ENCODE measurements at regions of chr22 and their contacts with region 1.

Region 1: DNA sequence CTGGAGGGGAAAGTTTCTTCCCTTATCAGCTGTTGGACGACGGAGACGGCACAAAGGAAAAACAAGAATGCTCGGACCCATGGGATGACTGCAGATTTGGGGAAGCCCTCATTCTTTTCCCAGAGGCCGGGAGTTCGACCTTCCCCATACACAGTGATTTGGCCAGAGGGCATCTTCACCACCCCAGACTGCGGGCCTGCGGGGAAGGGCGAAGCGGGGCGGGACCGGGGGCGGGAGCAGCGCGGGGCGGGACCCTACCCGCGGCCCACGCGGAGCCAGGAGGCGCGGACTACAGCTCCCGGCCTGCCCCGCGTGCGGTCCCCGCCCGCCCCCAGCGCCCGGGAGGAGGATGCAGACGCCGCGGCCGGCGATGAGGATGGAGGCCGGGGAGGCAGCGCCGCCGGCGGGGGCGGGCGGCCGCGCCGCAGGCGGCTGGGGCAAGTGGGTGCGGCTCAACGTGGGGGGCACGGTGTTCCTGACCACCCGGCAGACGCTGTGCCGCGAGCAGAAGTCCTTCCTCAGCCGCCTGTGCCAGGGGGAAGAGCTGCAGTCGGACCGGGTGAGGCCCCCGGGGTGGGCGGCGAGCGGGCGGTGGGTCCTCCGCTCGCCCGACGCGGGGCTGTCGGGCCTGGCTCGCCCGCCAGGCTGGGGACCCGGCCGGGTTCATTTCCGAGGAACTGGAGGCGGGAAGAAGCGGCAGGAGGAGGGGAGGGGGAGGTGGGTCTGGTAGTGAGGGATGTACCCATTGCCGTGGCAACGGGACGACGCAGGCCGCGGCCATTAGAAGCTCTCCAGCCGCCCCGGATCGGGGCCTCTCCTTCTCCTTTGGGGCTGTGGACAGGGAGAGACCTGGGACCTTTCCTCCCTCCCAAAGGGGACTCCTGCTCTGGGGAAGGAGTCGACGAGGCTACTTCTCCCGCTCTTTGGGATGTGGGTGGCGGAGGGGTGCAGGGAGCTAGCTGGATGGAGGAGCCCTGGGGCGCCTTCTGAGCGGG is at the start of gene KCTD17:
- DNase-seq: peak in 1 of 2 experiments; percentile 73
- H3K4me3 ChIP-seq: peak within 1 kb of the TSS; percentile 87
- H3K27ac ChIP-seq: no peak within 1 kb of the TSS
- H3K4me1 ChIP-seq: peaks cover 7% of the 10 kb centered on the region; the same call in 1 of the 2 replicates
- H3K27me3 ChIP-seq: no peaks in the 10 kb centered on the region
- CTCF ChIP-seq: no peak
- total RNA-seq, gene KCTD17: 29.5 and 32.6 TPM in 2 replicates

Region 2: DNA sequence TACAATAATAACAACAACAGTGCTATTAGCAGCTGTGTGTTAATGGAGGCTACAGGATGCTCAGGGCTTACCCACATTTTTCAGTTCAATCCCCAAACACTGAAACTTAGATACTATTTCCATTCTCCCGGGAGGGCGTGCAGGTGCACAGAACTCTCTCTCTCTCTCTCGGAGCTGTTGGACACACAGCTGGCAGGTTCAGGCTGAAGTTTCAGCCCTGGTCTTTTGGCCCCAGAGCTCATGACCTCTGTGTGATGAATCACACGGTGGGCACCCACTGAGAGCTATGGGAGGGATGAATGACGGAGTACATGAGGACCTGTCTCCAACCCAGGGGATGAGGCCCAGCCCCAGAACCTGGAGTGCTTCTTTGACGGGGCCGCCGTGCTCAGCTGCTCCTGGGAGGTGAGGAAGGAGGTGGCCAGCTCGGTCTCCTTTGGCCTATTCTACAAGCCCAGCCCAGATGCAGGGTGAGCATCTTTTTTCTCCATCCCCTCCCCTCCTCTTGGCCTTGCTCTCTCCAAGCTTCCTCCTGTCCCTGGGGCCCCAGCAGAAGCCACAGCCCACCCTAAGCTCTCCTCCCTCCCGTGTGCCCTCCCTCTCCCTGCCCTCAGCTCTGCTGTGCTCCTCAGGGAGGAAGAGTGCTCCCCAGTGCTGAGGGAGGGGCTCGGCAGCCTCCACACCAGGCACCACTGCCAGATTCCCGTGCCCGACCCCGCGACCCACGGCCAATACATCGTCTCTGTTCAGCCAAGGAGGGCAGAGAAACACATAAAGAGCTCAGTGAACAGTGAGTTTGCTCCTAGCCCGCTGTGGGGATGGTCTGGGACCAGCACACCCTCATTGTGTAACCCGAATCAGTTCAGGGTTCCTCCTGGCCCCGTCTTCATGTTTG is 121.4 kb before region 1 on chr22:
- CTCF ChIA-PET with region 1: interaction called, 12 read pairs
- POLR2A ChIA-PET with region 1: no interaction called
- intact Hi-C with region 1: no loop called
- DNase-seq: no peak
- H3K4me3 ChIP-seq: no peak overlapping the region
- H3K27ac ChIP-seq: no peak overlapping the region
- H3K4me1 ChIP-seq: peaks cover 6% of the 10 kb centered on the region; the same call in 1 of the 2 replicates
- H3K27me3 ChIP-seq: no peaks in the 10 kb centered on the region; the same call in 1 of the 2 replicates
- CTCF ChIP-seq: no peak

Region 3: GRCh38 chr22:37077884-37078485 is 26.3 kb after region 1 on chr22:
- CTCF ChIA-PET with region 1: no interaction called
- POLR2A ChIA-PET with region 1: no interaction called
- intact Hi-C with region 1: no loop called
- DNase-seq: peak in 1 of 2 experiments; percentile 74
- H3K4me3 ChIP-seq: no peak overlapping the region
- H3K27ac ChIP-seq: no peak overlapping the region
- H3K4me1 ChIP-seq: no peaks in the 10 kb centered on the region
- H3K27me3 ChIP-seq: peaks cover 43% of the 10 kb centered on the region
- CTCF ChIP-seq: peak; percentile 100

Region 4: GRCh38 chr22:37098976-37099591 is 47.4 kb after region 1 on chr22:
- CTCF ChIA-PET with region 1: interaction called, 3 read pairs
- POLR2A ChIA-PET with region 1: interaction called, 3 read pairs
- intact Hi-C with region 1: loop called (anchors 1 kb)
- DNase-seq: no peak
- H3K4me3 ChIP-seq: no peak overlapping the region
- H3K27ac ChIP-seq: no peak overlapping the region
- H3K4me1 ChIP-seq: no peaks in the 10 kb centered on the region
- H3K27me3 ChIP-seq: peaks cover 42% of the 10 kb centered on the region
- CTCF ChIP-seq: 0 out of 2 replicates have a peak, but pooled peaks have one; percentile 36